Caco-2 (cell line): ENCODE measurements at regions of chr5 and their contacts with region 1.

Region 1: DNA sequence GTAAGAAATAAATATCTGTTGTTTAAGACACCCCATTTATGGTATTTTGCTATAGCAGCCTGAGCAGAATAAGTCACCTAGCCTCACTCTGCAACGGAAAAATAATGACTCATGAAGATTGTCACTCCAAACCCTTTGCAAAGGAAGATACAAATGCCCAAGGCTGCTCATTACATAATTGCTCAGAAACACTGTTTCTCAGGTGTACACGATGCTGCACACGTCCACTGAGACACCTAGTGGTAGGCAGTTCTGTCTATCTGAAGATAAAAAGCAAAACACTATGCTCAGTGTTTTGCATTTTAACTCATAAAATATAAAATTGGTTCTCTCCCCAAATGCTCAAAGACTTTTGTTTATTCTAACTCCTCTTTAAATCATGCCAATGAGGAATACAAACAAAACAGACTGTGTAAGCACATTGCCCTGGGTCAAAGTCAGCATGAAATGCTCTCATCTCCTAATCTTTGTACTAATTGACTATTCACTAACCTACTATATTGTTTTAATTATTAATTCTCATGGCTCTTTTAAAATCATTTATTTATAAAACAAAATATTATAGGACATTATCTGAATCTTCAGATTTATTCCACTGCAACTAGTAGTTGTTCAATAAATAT is 7.7 kb upstream of the TSLP start:
- DNase-seq: peak in 1 of 2 experiments; percentile 24
- H3K4me3 ChIP-seq: no peak overlapping the region
- H3K4me3 Mint-ChIP-seq: no peak overlapping the region
- H3K27ac Mint-ChIP-seq: no peak overlapping the region
- H3K4me1 ChIP-seq: no peaks in the 10 kb centered on the region
- H3K4me1 Mint-ChIP-seq: no peaks in the 10 kb centered on the region
- H3K27me3 ChIP-seq: no peaks in the 10 kb centered on the region
- H3K27me3 Mint-ChIP-seq: peaks cover 27% of the 10 kb centered on the region
- CTCF ChIP-seq: peak; percentile 65 to 72

Region 2: DNA sequence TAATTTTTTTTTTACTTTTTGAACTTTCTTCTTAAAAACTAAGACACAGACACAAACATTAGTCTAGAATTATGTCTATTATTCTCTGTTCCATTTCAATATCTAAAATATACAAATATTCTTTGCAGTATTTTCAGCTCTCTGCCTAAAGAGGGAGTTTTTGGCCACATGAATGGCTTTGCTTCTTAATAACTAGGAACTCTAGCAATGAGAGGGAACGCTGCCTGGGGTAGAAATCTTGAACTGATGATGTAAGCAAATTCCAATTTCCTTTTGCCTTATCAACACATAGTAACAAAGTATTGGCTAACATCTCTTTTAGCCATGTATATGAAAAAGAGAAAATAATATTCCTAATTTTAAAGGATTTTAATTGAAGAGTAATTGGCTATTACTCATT is 273.1 kb before region 1 on chr5:
- CTCF ChIA-PET with region 1: no interaction called
- POLR2A ChIA-PET with region 1: no interaction called
- intact Hi-C with region 1: loop called (anchors 1 kb)
- DNase-seq: no peak
- H3K4me3 ChIP-seq: no peak overlapping the region
- H3K4me3 Mint-ChIP-seq: no peak overlapping the region
- H3K27ac Mint-ChIP-seq: no peak overlapping the region
- H3K4me1 ChIP-seq: no peaks in the 10 kb centered on the region
- H3K4me1 Mint-ChIP-seq: no peaks in the 10 kb centered on the region
- H3K27me3 ChIP-seq: no peaks in the 10 kb centered on the region
- H3K27me3 Mint-ChIP-seq: no peaks in the 10 kb centered on the region
- CTCF ChIP-seq: peak in 1 of 2 experiments; percentile 8

Region 3: DNA sequence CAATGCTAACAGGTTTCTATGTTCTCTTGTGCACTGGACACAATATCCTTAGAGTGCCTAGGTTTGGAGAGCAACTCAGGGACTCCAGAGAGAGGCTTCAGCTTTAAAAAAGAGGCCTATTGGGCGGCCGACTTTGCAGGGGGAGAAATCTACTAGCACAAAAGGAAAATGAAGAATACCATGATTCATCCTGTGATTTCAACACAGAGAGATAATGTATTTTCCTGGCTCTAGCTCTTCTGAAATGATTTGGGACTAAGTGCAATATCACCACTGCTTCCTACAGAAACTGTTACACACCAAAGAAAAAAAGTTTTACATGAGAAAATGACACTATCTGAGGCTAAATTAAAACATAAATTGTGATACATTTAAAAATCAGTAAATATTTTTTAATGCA is 138.4 kb before region 1 on chr5:
- CTCF ChIA-PET with region 1: no interaction called
- POLR2A ChIA-PET with region 1: no interaction called
- intact Hi-C with region 1: loop called (anchors 10 kb)
- DNase-seq: no peak
- H3K4me3 ChIP-seq: no peak overlapping the region
- H3K4me3 Mint-ChIP-seq: no peak overlapping the region
- H3K27ac Mint-ChIP-seq: no peak overlapping the region
- H3K4me1 ChIP-seq: no peaks in the 10 kb centered on the region
- H3K4me1 Mint-ChIP-seq: no peaks in the 10 kb centered on the region
- H3K27me3 ChIP-seq: no peaks in the 10 kb centered on the region
- H3K27me3 Mint-ChIP-seq: peaks cover 9% of the 10 kb centered on the region
- CTCF ChIP-seq: no peak

Region 4: GRCh38 chr5:111016801-111017200 is 47.0 kb before region 1 on chr5:
- CTCF ChIA-PET with region 1: no interaction called
- POLR2A ChIA-PET with region 1: no interaction called
- intact Hi-C with region 1: no loop called
- DNase-seq: no peak
- H3K4me3 ChIP-seq: no peak overlapping the region
- H3K4me3 Mint-ChIP-seq: no peak overlapping the region
- H3K27ac Mint-ChIP-seq: no peak overlapping the region
- H3K4me1 ChIP-seq: no peaks in the 10 kb centered on the region
- H3K4me1 Mint-ChIP-seq: no peaks in the 10 kb centered on the region
- H3K27me3 ChIP-seq: no peaks in the 10 kb centered on the region
- H3K27me3 Mint-ChIP-seq: peaks cover 5% of the 10 kb centered on the region
- CTCF ChIP-seq: no peak

Region 5: DNA sequence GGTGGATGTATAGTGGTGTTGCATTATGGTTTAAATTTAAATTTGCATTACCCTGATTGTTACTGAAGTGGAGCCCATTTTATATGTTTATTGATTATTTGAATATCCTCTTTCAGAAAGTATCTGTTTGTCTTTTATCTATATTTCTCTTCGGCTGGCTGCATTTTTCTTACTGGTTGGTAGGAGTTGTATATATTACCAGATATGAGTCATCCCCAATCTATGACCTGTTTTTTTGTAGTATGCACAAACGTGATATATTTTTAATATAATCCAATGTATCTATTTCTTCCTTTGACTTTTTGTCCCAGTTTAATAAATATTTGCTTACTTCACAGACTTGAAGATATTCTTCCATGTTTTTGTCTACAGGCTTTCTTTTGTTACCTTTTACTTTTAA is 131.1 kb after region 1 on chr5:
- CTCF ChIA-PET with region 1: no interaction called
- POLR2A ChIA-PET with region 1: no interaction called
- intact Hi-C with region 1: no loop called
- DNase-seq: no peak
- H3K4me3 ChIP-seq: no peak overlapping the region
- H3K4me3 Mint-ChIP-seq: no peak overlapping the region
- H3K27ac Mint-ChIP-seq: no peak overlapping the region
- H3K4me1 ChIP-seq: no peaks in the 10 kb centered on the region
- H3K4me1 Mint-ChIP-seq: no peaks in the 10 kb centered on the region
- H3K27me3 ChIP-seq: no peaks in the 10 kb centered on the region
- H3K27me3 Mint-ChIP-seq: peaks cover 7% of the 10 kb centered on the region
- CTCF ChIP-seq: no peak

Region 6: DNA sequence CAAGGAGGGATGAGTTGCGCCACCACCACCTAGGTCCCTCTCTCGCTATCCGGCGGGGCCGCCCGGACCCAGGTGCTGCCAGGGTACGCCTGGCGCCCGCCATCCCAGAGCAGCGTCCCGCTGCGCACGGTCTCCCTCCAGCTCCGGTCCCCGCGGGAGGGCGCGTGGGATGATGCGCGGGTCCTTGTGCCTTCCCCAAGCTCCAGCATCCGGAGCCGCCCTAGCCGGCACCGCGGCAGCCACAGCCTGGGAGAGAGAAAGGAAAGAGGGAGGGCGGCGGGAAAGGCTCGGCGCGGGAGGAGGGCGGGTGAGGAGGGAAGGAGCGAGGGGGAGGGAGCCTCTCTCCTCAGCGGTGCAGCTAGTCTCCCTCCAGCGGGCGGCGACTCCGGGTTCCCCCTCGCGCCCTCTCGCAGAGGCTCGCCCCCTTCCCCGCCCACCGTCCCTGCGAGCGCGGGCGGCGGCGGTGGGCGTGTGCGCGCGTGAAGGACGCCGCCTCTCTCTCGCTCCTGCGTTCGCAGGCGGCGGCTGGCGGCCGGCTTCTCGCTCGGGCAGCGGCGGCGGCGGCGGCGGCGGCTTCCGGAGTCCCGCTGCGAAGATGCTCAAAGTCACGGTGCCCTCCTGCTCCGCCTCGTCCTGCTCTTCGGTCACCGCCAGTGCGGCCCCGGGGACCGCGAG is 160.2 kb after region 1 on chr5 and contains the start of gene CAMK4:
- CTCF ChIA-PET with region 1: no interaction called
- POLR2A ChIA-PET with region 1: no interaction called
- intact Hi-C with region 1: no loop called
- DNase-seq: peak; percentile 44 to 46
- H3K4me3 ChIP-seq: peak within 1 kb of the TSS; percentile 43
- H3K4me3 Mint-ChIP-seq: peak within 1 kb of the TSS; percentile 59
- H3K27ac Mint-ChIP-seq: no peak within 1 kb of the TSS
- H3K4me1 ChIP-seq: peaks cover 3% of the 10 kb centered on the region; the same call in 1 of the 2 replicates
- H3K4me1 Mint-ChIP-seq: peaks cover 6% of the 10 kb centered on the region
- H3K27me3 ChIP-seq: peaks cover 10% of the 10 kb centered on the region
- H3K27me3 Mint-ChIP-seq: peaks cover 34% of the 10 kb centered on the region
- CTCF ChIP-seq: peak in 1 of 2 experiments; percentile 1
- total RNA-seq, gene CAMK4: not detected in 2 replicates